ENCODE measurements at regions of chr3 and their contacts with region 1.

Region 1: GRCh38 chr3:45100981-45101407 is 45.2 kb downstream of the CDCP1 start:
- DNase-seq: no peak
- H3K4me3 ChIP-seq: no peak overlapping the region
- H3K27ac ChIP-seq: no peak overlapping the region
- H3K4me1 ChIP-seq: peaks cover 20% of the 10 kb centered on the region
- H3K27me3 ChIP-seq: no peaks in the 10 kb centered on the region
- CTCF ChIP-seq: no peak

Region 2: GRCh38 chr3:45055411-45056143 is 45.4 kb before region 1 on chr3:
- CTCF ChIA-PET with region 1: no interaction called
- dilution Hi-C with region 1: no loop called
- in situ Hi-C with region 1: no loop called
- intact Hi-C with region 1: loop called (anchors 5 kb)
- DNase-seq: no peak
- H3K4me3 ChIP-seq: no peak overlapping the region
- H3K27ac ChIP-seq: peak overlapping the region; percentile 15
- H3K4me1 ChIP-seq: peaks cover 29% of the 10 kb centered on the region
- H3K27me3 ChIP-seq: no peaks in the 10 kb centered on the region
- CTCF ChIP-seq: peak; percentile 14 to 31

Region 3: GRCh38 chr3:45618081-45618509 is 517.1 kb after region 1 on chr3:
- CTCF ChIA-PET with region 1: no interaction called
- dilution Hi-C with region 1: no loop called
- in situ Hi-C with region 1: no loop called
- intact Hi-C with region 1: no loop called
- DNase-seq: no peak
- H3K4me3 ChIP-seq: no peak overlapping the region
- H3K27ac ChIP-seq: no peak overlapping the region
- H3K4me1 ChIP-seq: peaks cover 2% of the 10 kb centered on the region
- H3K27me3 ChIP-seq: no peaks in the 10 kb centered on the region
- CTCF ChIP-seq: no peak